ENCODE measurements at regions of chr10 and their contacts with region 1.

Region 1: GRCh38 chr10:68901104-68901927 is at the start of gene DDX50:
- DNase-seq: peak; percentile 99
- H3K4me3 ChIP-seq: peak within 1 kb of the TSS; percentile 68 to 94 (median 77)
- H3K27ac ChIP-seq: peak within 1 kb of the TSS; percentile 93
- H3K4me1 ChIP-seq: peaks cover 17% of the 10 kb centered on the region
- H3K27me3 ChIP-seq: no peaks in the 10 kb centered on the region
- CTCF ChIP-seq: no peak
- total RNA-seq, gene DDX50: 30.0 to 39.8 TPM

Region 2: DNA sequence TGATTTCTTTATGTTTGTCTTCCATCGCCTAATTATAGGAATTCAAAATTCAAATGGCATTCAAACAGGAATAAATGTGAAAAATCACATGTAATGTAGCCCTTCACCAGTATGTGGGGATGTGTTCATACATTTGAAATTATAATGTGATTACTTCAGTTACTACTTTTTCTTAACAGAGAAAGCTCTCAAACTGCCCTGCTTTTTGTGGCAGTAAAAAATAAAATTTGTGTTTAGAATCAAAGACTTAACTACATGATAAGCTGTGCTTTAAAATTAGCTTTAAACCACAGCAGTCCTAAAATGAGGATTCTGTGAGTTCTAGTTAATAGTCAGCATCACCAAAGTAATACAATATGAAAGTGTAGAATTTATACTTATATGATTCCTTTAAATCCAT is 818.4 kb before region 1 on chr10:
- CTCF ChIA-PET with region 1: no interaction called
- dilution Hi-C with region 1: no loop called
- in situ Hi-C with region 1: no loop called
- intact Hi-C with region 1: loop called (anchors 5 kb)
- DNase-seq: no peak
- H3K4me3 ChIP-seq: no peak overlapping the region
- H3K27ac ChIP-seq: no peak overlapping the region
- H3K4me1 ChIP-seq: peaks cover 29% of the 10 kb centered on the region
- H3K27me3 ChIP-seq: no peaks in the 10 kb centered on the region
- CTCF ChIP-seq: peak; percentile 56 to 64

Region 3: GRCh38 chr10:68301790-68302502 is 599.4 kb before region 1 on chr10:
- CTCF ChIA-PET with region 1: interaction called, 4 read pairs
- dilution Hi-C with region 1: no loop called
- in situ Hi-C with region 1: no loop called
- intact Hi-C with region 1: loop called (anchors 2 kb)
- DNase-seq: peak; percentile 30
- H3K4me3 ChIP-seq: no peak overlapping the region
- H3K27ac ChIP-seq: no peak overlapping the region
- H3K4me1 ChIP-seq: no peaks in the 10 kb centered on the region
- H3K27me3 ChIP-seq: no peaks in the 10 kb centered on the region
- CTCF ChIP-seq: peak; percentile 33 to 55

Region 4: GRCh38 chr10:68406815-68407548 is 494.3 kb before region 1 on chr10 and contains the start of gene RUFY2:
- CTCF ChIA-PET with region 1: no interaction called
- dilution Hi-C with region 1: no loop called
- in situ Hi-C with region 1: no loop called
- intact Hi-C with region 1: loop called (anchors 5 kb)
- DNase-seq: peak; percentile 62
- H3K4me3 ChIP-seq: peak within 1 kb of the TSS; percentile 84 to 97 (median 90)
- H3K27ac ChIP-seq: peak within 1 kb of the TSS; percentile 88
- H3K4me1 ChIP-seq: peaks cover 5% of the 10 kb centered on the region
- H3K27me3 ChIP-seq: no peaks in the 10 kb centered on the region
- CTCF ChIP-seq: peak; percentile 43 to 50
- total RNA-seq, gene RUFY2: 27.2 to 28.9 TPM

Region 5: DNA sequence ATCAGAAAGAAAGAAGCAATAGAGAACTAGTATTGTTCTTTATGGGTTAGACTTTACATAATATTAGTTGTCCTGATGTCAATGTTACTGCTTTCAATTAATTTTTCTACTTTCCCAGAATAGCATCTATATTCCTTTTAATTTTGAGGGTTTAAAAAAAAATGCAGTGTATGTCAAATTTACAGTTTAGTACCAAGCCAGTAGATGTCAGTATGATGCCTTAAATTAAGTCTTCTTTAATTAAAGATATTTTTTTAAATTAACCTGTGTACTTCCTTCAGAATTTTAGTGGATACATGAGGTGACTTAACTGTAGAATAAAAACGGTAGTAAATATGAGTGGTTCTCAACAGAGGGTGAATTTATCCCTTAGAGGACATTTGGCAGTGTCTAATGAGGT is 109.2 kb before region 1 on chr10:
- CTCF ChIA-PET with region 1: no interaction called
- dilution Hi-C with region 1: no loop called
- in situ Hi-C with region 1: loop called (anchors 10 kb)
- intact Hi-C with region 1: loop called (anchors 1 kb)
- DNase-seq: no peak
- H3K4me3 ChIP-seq: no peak overlapping the region
- H3K27ac ChIP-seq: no peak overlapping the region
- H3K4me1 ChIP-seq: peaks cover 11% of the 10 kb centered on the region
- H3K27me3 ChIP-seq: no peaks in the 10 kb centered on the region
- CTCF ChIP-seq: peak; percentile 10 to 15

Region 6: DNA sequence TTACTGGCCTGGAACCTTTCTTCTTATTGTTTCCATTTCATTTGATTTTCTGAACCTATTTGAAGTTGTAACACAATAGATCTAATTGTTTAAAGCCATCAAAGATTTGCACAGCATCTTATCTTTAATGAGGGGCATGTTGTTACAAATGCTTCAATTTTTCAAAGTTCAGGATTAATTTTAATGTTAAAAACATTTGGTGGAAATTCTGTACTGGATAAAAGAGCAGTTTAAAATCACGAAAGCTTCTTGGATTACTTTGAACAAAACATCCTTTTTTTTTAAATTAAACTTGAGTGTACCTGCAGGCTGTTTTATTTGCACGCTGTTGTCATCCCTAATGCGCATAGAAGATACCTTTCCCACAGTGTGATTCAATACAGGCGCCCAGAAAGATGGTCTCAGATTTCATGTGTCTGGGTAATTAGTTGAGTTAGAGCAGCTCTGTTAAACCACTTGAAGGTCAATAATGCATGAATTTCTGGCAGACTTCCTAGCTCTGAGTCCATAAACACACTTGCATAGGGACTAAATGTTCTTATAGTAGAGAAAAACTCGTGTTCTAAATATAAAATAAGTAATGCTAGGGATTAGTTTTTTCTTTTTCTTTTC is 29.5 kb before region 1 on chr10:
- CTCF ChIA-PET with region 1: no interaction called
- dilution Hi-C with region 1: no loop called
- in situ Hi-C with region 1: no loop called
- intact Hi-C with region 1: no loop called
- DNase-seq: no peak
- H3K4me3 ChIP-seq: no peak overlapping the region
- H3K27ac ChIP-seq: no peak overlapping the region
- H3K4me1 ChIP-seq: no peaks in the 10 kb centered on the region
- H3K27me3 ChIP-seq: no peaks in the 10 kb centered on the region
- CTCF ChIP-seq: no peak